ENCODE measurements at regions of chr12 and their contacts with region 1.

Region 1: DNA sequence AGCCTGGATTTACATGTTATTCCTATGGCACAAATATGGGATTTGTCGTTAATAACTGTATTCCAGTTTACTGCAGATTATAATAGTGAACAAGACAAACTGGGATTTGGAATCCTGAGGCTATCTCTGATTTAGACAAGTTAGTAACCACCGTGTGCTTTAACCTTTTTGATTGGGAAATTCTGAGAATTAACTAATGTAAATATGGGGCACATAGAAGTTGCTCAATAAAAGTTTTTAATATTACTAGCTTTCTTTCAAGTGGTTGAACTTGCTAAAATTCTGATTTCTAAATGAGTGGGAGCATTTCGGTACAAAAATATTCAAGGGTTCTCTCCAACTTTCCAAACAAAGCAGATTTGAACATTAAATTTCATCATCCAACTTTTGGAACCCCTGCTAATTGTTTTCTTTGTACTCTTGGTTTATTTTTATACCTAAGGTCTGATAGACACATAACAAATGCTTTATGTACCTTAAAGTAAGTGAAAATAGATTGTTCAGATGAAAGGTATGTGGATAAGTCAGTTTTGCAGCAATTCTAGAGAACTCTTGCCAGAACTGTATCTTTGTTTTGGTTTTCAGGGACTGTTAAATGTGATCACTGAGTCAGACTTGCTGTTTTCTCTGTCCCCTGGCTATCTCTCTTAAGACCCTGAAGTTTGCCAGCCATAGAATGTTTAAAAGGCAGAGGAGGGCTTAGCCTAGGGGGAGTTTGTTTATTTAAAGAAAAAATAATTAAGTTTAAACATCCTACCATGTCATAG is 57.5 kb downstream of the FRS2 start:
- DNase-seq: no peak
- H3K4me3 ChIP-seq: no peak overlapping the region
- H3K27ac ChIP-seq: peak overlapping the region; percentile 6 to 56 (median 30)
- H3K4me1 ChIP-seq: peaks cover 0 to 31% (median 13%) of the 10 kb centered on the region in 4 donors
- H3K27me3 ChIP-seq: no peaks in the 10 kb centered on the region
- CTCF ChIP-seq: no peak
- EP300 ChIP-seq: no peak
- POLR2A ChIP-seq: no peak

Region 2: DNA sequence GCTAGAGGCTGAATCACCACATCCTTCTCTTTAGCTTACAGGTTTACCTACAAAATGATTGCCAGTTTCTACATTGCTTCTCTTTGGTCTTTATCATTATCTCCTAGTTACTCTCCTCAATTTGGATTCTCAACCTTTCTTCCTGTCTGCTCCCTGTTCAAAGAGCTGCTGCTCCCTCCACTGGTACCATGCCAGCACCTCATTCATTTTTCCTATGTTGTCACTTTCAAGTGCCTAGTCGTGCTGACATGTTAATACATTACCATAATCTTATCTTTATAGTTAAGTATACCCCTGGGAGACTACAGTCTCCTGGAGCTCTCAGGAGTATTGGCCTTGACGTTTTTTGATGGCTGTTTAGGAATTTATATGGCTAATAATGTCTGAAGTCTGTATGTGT is 43.3 kb before region 1 on chr12:
- intact Hi-C with region 1: loop called (anchors 5 kb)
- DNase-seq: no peak
- H3K4me3 ChIP-seq: no peak overlapping the region
- H3K27ac ChIP-seq: no peak overlapping the region
- H3K4me1 ChIP-seq: peaks cover 0 to 29% (median 23%) of the 10 kb centered on the region in 4 donors
- H3K27me3 ChIP-seq: no peaks in the 10 kb centered on the region
- CTCF ChIP-seq: no peak
- EP300 ChIP-seq: no peak
- POLR2A ChIP-seq: no peak

Region 3: GRCh38 chr12:69616025-69616424 is 88.3 kb after region 1 on chr12:
- intact Hi-C with region 1: no loop called
- DNase-seq: no peak
- H3K4me3 ChIP-seq: no peak overlapping the region
- H3K27ac ChIP-seq: no peak overlapping the region
- H3K4me1 ChIP-seq: no peaks in the 10 kb centered on the region
- H3K27me3 ChIP-seq: no peaks in the 10 kb centered on the region
- CTCF ChIP-seq: no peak
- EP300 ChIP-seq: no peak
- POLR2A ChIP-seq: no peak

Region 4: GRCh38 chr12:69708649-69709048 is 181.0 kb after region 1 on chr12:
- intact Hi-C with region 1: no loop called
- DNase-seq: no peak
- H3K4me3 ChIP-seq: no peak overlapping the region
- H3K27ac ChIP-seq: no peak overlapping the region
- H3K4me1 ChIP-seq: no peaks in the 10 kb centered on the region
- H3K27me3 ChIP-seq: no peaks in the 10 kb centered on the region
- CTCF ChIP-seq: no peak
- EP300 ChIP-seq: no peak
- POLR2A ChIP-seq: no peak

Measured in sigmoid colon (tissue), 7 donors.